ENCODE measurements at regions of chr5 and their contacts with region 1.

Region 1: GRCh38 chr5:168679515-168679920 is 100.3 kb upstream of the PANK3 start:
- ATAC-seq: peak; percentile 38 to 89 (median 81)
- H3K4me3 ChIP-seq: no peak overlapping the region
- H3K27ac ChIP-seq: no peak overlapping the region
- H3K4me1 ChIP-seq: peaks cover 0 to 2% of the 10 kb centered on the region in 2 donors

Region 2: GRCh38 chr5:168291464-168291961 is 388.0 kb before region 1 on chr5 and contains the start of gene WWC1:
- in situ Hi-C with region 1: loop called in 1 of 9 experiments (anchors 25 kb)
- ATAC-seq: peak; percentile 65 to 88 (median 76)
- H3K4me3 ChIP-seq: peak within 1 kb of the TSS; percentile 57 to 96 (median 72)
- H3K27ac ChIP-seq: no peak within 1 kb of the TSS
- H3K4me1 ChIP-seq: peaks cover 20 to 26% of the 10 kb centered on the region in 2 donors
- total RNA-seq, gene WWC1: 5.6 to 74.1 (median 8.9) TPM

Region 3: GRCh38 chr5:168947212-168947868 is 267.8 kb after region 1 on chr5:
- in situ Hi-C with region 1: loop called in 1 of 9 experiments (anchors 25 kb)
- ATAC-seq: peak; percentile 6 to 82 (median 22)
- H3K4me3 ChIP-seq: no peak overlapping the region
- H3K27ac ChIP-seq: no peak overlapping the region
- H3K4me1 ChIP-seq: peaks cover 21% of the 10 kb centered on the region in 2 donors

Region 4: GRCh38 chr5:169302491-169303118 is 623.1 kb after region 1 on chr5:
- in situ Hi-C with region 1: loop called in 1 of 9 experiments (anchors 25 kb)
- ATAC-seq: peak in 6 of 8 experiments; percentile 4 to 37 (median 24)
- H3K4me3 ChIP-seq: no peak overlapping the region
- H3K27ac ChIP-seq: no peak overlapping the region
- H3K4me1 ChIP-seq: peaks cover 6 to 11% of the 10 kb centered on the region in 2 donors

Region 5: DNA sequence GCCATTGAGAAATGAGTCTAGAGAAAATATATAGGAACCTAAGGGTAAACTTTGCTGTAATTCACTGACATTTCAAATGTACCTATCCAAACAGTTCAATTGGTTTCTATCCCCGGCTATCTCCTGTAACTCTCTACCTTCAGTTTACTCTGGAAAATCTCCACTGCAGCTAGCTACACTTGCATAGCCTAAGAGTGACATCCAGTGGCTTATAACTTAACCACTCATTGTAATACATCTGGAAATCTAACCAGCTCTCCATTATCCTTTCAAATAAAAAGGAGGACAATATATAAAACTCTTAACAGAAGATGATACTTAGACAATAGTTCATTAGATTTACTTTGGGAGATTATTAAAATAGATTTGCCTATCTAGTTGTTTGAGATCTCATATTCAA is 868.8 kb after region 1 on chr5:
- in situ Hi-C with region 1: loop called in 2 of 9 experiments (anchors 25 kb)
- ATAC-seq: peak in 4 of 8 experiments; percentile 49 to 86 (median 82)
- H3K4me3 ChIP-seq: no peak overlapping the region
- H3K27ac ChIP-seq: no peak overlapping the region
- H3K4me1 ChIP-seq: no peaks in the 10 kb centered on the region

Region 6: DNA sequence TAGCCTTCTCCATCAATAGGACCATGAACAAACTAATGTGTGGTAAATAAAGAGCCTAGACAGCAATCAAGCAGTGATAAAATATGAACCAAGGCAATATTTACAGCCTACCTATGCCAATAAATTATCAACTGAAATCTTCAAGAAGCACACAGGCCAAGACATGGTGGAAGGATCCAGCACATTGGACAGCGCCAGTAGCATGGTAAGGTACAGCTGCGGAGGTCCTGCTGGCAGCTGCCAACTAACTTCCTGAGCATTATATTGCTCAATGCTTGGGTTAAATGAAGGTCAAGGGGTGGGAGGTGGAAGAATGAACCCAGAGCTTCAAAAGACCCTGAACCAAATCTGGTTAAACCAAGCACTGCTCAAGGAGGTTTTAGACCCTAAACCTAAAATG is 887.6 kb after region 1 on chr5:
- in situ Hi-C with region 1: loop called in 1 of 9 experiments (anchors 25 kb)
- ATAC-seq: no peak
- H3K4me3 ChIP-seq: no peak overlapping the region
- H3K27ac ChIP-seq: no peak overlapping the region
- H3K4me1 ChIP-seq: peaks cover 0 to 2% of the 10 kb centered on the region in 2 donors

Measured in motor neuron (in vitro differentiated cells).